ENCODE measurements at regions of chr17 and their contacts with region 1.

Region 1: GRCh38 chr17:74748529-74749365 is at the start of gene NHERF1:
- DNase-seq: peak; percentile 93
- H3K4me3 Mint-ChIP-seq: peak within 1 kb of the TSS; percentile 94
- H3K27ac Mint-ChIP-seq: peak within 1 kb of the TSS; percentile 93
- H3K4me1 Mint-ChIP-seq: peaks cover 54% of the 10 kb centered on the region
- H3K27me3 Mint-ChIP-seq: no peaks in the 10 kb centered on the region
- total RNA-seq, gene NHERF1: 70.8 to 77.6 TPM

Region 2: DNA sequence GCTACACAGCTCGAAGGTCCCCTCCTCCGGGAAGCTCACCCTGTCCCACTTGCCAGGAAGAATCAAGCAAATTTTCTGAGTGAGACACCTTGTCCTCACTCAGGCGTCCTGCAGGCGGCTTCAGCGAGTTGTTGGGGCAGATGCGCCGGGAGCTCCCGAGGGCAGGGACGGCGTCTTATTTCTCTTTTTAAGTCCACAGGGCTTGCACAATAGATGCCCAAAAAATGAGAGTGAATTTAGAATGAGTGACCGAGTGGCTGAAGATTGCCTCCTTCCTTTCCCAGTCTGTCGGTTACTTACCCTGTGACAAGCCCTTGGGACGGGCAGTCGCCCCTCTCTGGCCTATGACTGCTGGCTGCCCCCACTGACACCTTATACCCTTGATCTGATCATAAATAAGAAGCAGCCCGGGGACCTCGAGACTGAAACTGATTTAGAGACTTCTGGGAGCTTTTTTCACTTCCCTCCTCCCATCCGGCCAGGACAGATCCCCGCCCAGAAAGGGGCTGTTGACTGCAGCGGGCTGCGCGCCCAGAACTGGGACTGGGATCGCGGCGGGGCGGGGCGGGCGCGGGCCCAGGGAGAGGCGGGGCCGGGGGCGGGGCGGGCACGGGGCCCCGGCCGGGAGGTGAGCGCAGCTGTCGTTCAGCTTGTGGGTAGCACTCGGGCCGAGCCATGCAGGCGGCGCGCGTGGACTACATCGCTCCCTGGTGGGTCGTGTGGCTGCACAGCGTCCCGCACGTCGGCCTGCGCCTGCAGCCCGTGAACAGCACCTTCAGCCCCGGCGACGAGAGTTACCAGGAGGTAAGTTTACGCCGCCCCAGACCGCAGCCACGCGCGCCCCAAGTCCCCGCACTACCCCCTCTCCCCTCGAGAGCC is 535.6 kb before region 1 on chr17 and contains the start of gene TTYH2:
- CTCF ChIA-PET with region 1: no interaction called
- intact Hi-C with region 1: no loop called
- DNase-seq: peak; percentile 78
- H3K4me3 Mint-ChIP-seq: peak within 1 kb of the TSS; percentile 74
- H3K27ac Mint-ChIP-seq: peak within 1 kb of the TSS; percentile 24
- H3K4me1 Mint-ChIP-seq: peaks cover 62% of the 10 kb centered on the region
- H3K27me3 Mint-ChIP-seq: no peaks in the 10 kb centered on the region
- total RNA-seq, gene TTYH2: 2.5 to 2.8 TPM

Region 3: DNA sequence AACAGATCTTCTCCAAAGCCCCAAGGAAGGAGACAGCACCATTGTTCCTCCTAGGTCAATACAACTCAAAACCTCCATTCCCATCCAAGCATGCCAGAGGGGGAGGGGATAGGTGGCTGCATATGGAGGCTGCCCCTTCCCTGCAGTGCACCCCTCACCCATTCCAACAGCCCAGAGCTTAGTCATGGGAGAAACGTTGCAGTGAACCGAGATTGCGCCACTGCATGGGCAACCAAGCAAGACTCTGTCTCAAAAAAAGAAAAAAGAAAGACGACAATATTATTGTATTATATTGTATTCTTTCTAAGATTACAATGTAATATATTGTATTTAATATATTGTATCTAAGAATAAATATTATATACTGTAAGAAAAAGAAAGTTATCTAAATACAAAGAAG is 88.8 kb before region 1 on chr17:
- CTCF ChIA-PET with region 1: interaction called, 18 read pairs
- intact Hi-C with region 1: no loop called
- DNase-seq: no peak
- H3K4me3 Mint-ChIP-seq: no peak overlapping the region
- H3K27ac Mint-ChIP-seq: no peak overlapping the region
- H3K4me1 Mint-ChIP-seq: peaks cover 3% of the 10 kb centered on the region
- H3K27me3 Mint-ChIP-seq: peaks cover 20% of the 10 kb centered on the region

Region 4: GRCh38 chr17:74759243-74759801 is 10.6 kb after region 1 on chr17:
- CTCF ChIA-PET with region 1: interaction called, 31 read pairs
- intact Hi-C with region 1: loop called (anchors 1 kb)
- DNase-seq: peak; percentile 70
- H3K4me3 Mint-ChIP-seq: no peak overlapping the region
- H3K27ac Mint-ChIP-seq: peak overlapping the region; percentile 86
- H3K4me1 Mint-ChIP-seq: peaks cover 61% of the 10 kb centered on the region
- H3K27me3 Mint-ChIP-seq: no peaks in the 10 kb centered on the region

Region 5: GRCh38 chr17:74776044-74776977 is 27.6 kb after region 1 on chr17 and contains the start of gene NAT9:
- CTCF ChIA-PET with region 1: interaction called, 59 read pairs
- intact Hi-C with region 1: loop called (anchors 1 kb)
- DNase-seq: peak; percentile 98
- H3K4me3 Mint-ChIP-seq: peak within 1 kb of the TSS; percentile 100
- H3K27ac Mint-ChIP-seq: peak within 1 kb of the TSS; percentile 89
- H3K4me1 Mint-ChIP-seq: peaks cover 62% of the 10 kb centered on the region
- H3K27me3 Mint-ChIP-seq: no peaks in the 10 kb centered on the region
- total RNA-seq, gene NAT9: 42.1 to 43.9 TPM

Region 6: DNA sequence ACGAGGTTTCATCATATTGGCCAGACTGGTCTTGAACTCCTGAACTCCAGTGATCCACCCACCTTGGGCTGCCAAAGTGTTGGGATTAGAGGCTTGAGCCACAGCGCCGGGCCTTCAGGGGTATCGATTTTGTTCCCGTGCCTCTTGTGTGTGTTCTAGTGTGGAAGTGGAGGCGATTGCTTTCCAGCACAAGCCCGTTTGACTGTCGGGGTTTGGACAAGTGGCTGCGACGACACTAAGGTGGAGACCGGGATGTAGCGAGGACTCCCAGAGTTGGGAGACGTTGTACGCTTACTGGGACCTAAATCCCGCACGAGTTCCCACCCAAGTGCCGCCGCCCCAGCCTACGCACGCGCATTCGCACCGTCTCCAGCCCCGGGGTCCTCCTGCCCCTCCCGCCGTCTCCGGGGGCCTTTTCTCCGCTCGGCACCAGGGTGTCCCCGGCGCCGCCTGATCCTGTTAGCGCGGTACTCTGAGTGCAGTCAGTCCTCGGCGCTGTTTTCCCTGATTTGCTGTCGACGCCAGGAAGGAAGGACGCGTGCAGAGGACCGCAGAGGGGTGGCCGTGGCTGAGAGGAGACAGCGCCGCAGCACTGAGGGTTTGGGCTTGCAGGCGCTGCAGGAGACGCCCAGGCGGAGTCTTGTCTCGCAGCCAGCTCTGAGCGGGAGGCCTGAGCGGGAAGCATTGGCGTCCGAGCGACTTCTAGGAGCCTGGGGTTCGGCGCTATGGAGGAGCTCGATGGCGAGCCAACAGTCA is 456.5 kb after region 1 on chr17 and contains the start of gene NUP85:
- CTCF ChIA-PET with region 1: no interaction called
- intact Hi-C with region 1: loop called (anchors 10 kb)
- DNase-seq: peak; percentile 94
- H3K4me3 Mint-ChIP-seq: peak within 1 kb of the TSS; percentile 98
- H3K27ac Mint-ChIP-seq: peak within 1 kb of the TSS; percentile 98
- H3K4me1 Mint-ChIP-seq: peaks cover 24% of the 10 kb centered on the region
- H3K27me3 Mint-ChIP-seq: no peaks in the 10 kb centered on the region
- total RNA-seq, gene NUP85: 112 to 116 TPM

Measured in activated naive CD4-positive, alpha-beta T cell treated with anti-CD3 and anti-CD28 coated beads for 36 hours (primary cell).